Gastrocnemius medialis (tissue), 4 donors: ENCODE measurements at regions of chr1 and their contacts with region 1.

Region 1: GRCh38 chr1:5514519-5515183 is 477.6 kb downstream of the NPHP4 start:
- DNase-seq: peak in 1 of 2 donors; percentile 28
- ATAC-seq: peak in 1 of 2 donors; percentile 56
- H3K4me3 ChIP-seq: no peak overlapping the region
- H3K27ac ChIP-seq: no peak overlapping the region
- H3K4me1 ChIP-seq: no peaks in the 10 kb centered on the region
- H3K27me3 ChIP-seq: peaks cover 0 to 3% (median 2%) of the 10 kb centered on the region in 3 donors
- CTCF ChIP-seq: peak; percentile 76 to 99 (median 84)
- POLR2A ChIP-seq: no peak

Region 2: DNA sequence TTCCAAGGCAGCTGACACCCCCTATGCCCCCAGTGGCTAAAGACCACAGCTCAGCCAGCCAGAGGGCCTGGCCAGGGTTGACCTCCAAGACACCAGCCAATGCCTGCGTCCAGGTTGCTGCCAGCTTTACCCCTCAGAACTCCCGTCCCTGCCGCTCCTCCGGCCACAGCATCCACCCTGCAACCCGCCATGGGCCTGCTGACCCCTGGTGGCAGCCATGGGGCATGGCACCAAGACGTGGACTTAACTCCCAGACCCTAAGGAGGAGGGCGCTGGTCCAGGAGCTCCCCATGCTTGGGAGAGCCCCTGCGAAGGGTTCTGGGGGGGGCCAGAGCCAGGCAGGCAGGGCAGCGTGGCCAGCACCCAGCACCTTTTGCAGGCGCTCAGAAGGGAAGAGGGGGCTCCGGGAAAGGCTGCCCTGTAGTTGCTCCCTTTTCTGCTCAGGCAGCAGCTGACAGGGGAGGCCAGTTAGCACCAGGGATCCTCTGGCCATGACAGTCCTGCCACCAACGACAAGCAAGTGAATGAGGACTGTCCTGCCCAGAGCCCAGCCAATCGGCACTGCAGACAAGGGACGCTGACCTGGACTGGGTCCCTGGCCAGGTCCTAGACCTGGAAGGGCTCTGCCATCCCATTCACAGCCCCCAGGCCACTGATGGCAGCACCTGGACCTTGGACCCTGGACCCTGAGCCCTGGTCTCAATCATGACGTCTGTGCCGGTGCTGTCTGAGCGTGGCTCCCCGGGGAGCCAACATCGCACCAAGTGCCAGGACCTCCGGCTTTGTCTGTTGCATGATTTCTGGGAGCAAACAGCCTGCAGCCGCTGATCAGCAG is 231.3 kb after region 1 on chr1:
- in situ Hi-C with region 1: loop called in 1 of 4 experiments (anchors 25 kb)
- intact Hi-C with region 1: no loop called
- DNase-seq: peak in 1 of 2 donors; percentile 17
- ATAC-seq: no peak
- H3K4me3 ChIP-seq: no peak overlapping the region
- H3K27ac ChIP-seq: no peak overlapping the region
- H3K4me1 ChIP-seq: no peaks in the 10 kb centered on the region
- H3K27me3 ChIP-seq: peaks cover 3 to 12% (median 9%) of the 10 kb centered on the region in 3 donors
- CTCF ChIP-seq: peak; percentile 36 to 73 (median 65)
- POLR2A ChIP-seq: no peak

Region 3: DNA sequence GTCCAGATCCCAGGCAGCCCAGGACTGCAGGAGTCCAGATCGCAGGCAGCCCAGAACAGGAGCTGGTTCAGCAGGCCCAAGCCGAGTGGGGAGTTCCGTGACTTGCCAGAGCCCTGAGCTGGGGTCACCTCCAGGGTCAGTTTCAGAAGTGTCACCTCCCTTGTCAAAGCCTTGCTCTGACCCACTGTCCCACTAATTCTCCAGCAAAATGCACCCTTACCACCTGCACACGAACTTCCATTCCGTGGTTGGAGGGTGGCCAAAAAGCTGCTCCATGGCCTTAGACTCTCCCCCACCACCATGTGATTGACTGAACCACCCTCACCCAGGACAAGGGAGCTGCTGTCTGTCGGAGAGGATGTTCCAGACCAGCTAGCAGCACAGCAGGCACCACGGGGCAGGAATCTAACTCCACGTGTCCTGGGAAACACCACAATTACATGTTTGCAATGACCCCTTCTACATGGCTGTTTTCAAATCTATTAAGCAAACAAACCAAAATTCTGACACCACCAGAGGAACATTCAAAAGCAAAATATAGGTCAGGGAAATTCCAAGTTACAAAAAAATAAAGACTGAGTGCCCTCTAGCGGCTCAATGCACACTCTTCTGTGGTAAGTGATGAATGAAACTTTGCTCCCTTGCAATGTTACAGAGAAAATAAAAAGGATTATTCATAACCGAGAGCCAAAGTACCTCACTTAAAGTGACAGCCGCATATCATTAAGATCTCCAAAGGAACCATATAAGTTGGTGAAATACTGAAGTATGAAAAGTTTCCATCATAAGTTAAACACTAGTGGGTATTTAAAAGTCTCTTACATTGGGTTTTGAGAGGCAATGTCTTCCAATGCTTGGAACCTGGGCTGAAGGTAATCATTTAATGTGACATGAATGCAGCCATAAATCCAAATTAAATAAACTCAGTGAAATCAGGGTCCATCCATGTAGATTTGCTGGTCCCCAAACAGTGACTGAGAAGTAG is 401.2 kb after region 1 on chr1:
- in situ Hi-C with region 1: loop called in 2 of 4 experiments (anchors 25 kb)
- intact Hi-C with region 1: loop called (anchors 5 kb)
- DNase-seq: no peak
- ATAC-seq: no peak
- H3K4me3 ChIP-seq: no peak overlapping the region
- H3K27ac ChIP-seq: no peak overlapping the region
- H3K4me1 ChIP-seq: no peaks in the 10 kb centered on the region
- H3K27me3 ChIP-seq: no peaks in the 10 kb centered on the region
- CTCF ChIP-seq: peak in 2 of 5 experiments; percentile 38 to 51
- POLR2A ChIP-seq: no peak

Region 4: GRCh38 chr1:5949085-5949760 is 434.6 kb after region 1 on chr1:
- in situ Hi-C with region 1: loop called in 2 of 4 experiments (anchors 25 kb)
- intact Hi-C with region 1: no loop called
- DNase-seq: no peak
- ATAC-seq: no peak
- H3K4me3 ChIP-seq: no peak overlapping the region
- H3K27ac ChIP-seq: no peak overlapping the region
- H3K4me1 ChIP-seq: no peaks in the 10 kb centered on the region
- H3K27me3 ChIP-seq: no peaks in the 10 kb centered on the region
- CTCF ChIP-seq: no peak
- POLR2A ChIP-seq: no peak

Region 5: GRCh38 chr1:5973771-5974170 is 459.1 kb after region 1 on chr1:
- in situ Hi-C with region 1: loop called in 1 of 4 experiments (anchors 25 kb)
- intact Hi-C with region 1: no loop called
- DNase-seq: no peak
- ATAC-seq: no peak
- H3K4me3 ChIP-seq: no peak overlapping the region
- H3K27ac ChIP-seq: no peak overlapping the region
- H3K4me1 ChIP-seq: no peaks in the 10 kb centered on the region
- H3K27me3 ChIP-seq: no peaks in the 10 kb centered on the region
- CTCF ChIP-seq: no peak
- POLR2A ChIP-seq: no peak